ENCODE measurements at regions of chr5 and their contacts with region 1.

Region 1: DNA sequence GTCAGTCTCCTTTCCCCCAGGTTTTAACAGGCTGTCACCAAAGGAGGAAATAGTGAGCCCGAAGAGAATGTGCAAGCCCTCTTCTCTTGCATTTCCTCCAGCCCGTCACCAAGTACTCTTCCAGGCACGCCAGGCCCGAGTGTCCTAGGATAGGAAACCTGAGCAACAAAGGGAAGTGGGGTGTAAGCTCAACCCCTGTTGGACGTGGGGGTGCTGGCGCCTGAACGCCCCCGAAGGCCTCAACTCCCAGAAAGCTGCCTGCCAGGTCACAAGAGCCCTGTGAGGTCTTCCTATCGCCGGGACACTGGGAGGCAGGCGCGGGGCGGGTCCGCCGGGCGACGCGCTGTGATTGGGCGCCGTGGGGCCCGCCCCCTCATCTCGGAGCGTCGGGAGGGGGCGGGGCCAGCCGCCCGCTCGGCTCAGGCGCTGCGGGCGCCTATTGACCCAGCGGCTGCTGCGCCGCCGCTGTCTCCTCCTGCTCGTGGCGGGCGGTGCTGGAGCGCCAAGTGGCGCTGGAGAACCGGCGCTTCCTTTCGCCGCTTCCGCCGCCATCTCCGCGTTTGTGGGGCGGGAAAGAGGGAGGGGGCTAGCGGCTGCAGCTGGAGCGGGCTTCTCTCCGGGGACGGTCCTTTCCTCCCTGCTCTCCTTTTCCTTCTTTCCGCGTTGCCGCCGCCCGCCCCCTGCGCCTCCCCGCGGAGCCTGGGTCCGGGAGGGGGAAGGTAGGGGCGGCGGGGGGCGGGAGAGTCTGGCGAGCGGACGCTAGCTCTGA is 572 bp upstream of the MAN2A1 start:
- H3K4me3 Mint-ChIP-seq: peak overlapping the region; percentile 94
- H3K27ac Mint-ChIP-seq: peak overlapping the region; percentile 93
- H3K4me1 Mint-ChIP-seq: peaks cover 31% of the 10 kb centered on the region
- H3K27me3 Mint-ChIP-seq: no peaks in the 10 kb centered on the region

Region 2: DNA sequence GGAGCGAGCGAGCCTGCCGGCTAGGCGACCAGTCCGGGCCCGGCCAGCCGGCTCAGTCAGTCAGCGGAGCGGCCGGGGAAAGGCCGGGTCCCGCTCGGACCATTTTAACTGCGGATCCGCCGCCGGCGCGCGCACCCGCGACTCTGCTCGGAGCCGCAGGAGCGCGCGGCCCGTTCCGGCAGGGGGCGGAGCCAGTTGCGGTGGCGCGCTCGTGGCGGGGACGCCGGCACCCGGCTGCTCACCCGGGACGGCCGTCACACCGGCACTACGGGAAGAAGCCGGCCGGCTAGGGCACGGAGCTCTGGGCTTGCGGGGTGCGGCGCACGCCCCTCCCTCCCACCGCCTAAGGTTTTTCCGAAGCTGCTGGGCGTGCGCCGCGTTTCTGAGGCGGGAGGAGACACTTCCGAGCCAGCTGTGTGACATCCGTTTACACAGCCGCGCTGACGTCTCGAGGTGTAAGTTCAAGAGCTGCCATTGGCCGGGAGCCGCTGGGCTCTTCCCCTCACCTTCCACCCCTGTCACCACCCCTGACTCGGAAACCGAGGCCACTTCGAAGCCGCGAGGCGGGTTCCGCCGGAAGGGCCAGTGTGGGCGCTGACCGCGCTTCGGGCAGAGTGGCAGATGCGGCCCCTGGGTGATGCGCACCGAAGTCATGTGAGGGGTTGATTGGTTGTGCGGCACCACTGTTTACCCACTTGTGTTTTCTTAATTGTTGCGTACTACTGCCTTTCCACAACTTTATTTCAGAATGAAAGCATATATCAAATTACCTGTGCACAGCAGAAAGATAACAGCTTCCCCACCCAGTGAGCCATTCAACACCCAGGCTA is 1307.0 kb before region 1 on chr5 and contains the start of gene FBXL17:
- intact Hi-C with region 1: loop called (anchors 10 kb)
- H3K4me3 Mint-ChIP-seq: peak within 1 kb of the TSS; percentile 80
- H3K27ac Mint-ChIP-seq: peak within 1 kb of the TSS; percentile 93
- H3K4me1 Mint-ChIP-seq: peaks cover 25% of the 10 kb centered on the region
- H3K27me3 Mint-ChIP-seq: peaks cover 7% of the 10 kb centered on the region

Region 3: DNA sequence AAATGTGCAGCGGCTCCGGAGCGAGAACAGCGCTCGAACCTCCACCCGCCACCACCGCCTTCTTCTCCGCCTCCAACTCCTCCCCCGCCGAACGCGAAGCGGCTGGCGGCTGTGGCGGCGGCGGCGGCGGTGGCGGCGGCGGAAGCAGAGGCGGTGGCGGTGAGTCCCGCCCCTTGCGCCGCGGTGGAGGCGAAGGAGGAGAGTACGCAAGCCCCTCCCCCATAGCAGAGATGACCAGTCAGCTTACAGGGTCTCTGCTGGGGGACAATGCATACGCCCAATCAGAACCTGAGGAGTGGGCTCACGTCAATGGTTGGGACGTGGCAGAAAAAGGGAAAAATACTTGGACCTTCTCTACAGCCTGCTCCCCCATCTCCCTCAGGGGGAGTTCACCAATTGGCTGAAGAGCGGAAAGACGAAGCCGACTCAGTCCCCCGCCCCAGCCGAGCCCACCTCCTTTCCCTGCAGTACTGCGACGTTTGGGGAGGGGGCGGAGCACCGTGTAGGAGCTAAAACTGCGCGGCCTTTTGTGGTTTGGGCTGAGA is 279.2 kb before region 1 on chr5 and contains the start of gene PJA2:
- intact Hi-C with region 1: loop called (anchors 1 kb)
- H3K4me3 Mint-ChIP-seq: peak within 1 kb of the TSS; percentile 97
- H3K27ac Mint-ChIP-seq: peak within 1 kb of the TSS; percentile 98
- H3K4me1 Mint-ChIP-seq: peaks cover 22% of the 10 kb centered on the region
- H3K27me3 Mint-ChIP-seq: no peaks in the 10 kb centered on the region

Region 4: DNA sequence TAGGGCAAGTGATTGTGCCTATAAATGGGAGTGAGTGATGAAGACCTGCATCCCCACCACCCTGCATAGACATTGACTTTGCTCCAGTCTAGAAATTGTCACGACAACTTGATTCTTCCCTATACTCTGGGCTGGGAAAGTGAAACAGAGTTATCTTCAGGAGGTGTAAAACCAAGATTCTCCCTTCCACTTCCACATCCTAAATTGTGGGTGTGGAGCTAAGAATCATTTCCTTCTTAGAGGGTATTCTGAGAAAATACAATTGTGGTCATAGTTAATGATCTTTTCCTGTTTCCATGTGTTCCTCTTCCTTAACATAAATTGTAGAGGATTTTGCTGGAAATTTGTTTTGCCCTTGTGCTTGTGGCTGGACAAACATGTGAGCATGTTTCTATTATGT is 182.6 kb before region 1 on chr5:
- intact Hi-C with region 1: loop called (anchors 10 kb)
- H3K4me3 Mint-ChIP-seq: no peak overlapping the region
- H3K27ac Mint-ChIP-seq: no peak overlapping the region
- H3K4me1 Mint-ChIP-seq: peaks cover 13% of the 10 kb centered on the region
- H3K27me3 Mint-ChIP-seq: peaks cover 37% of the 10 kb centered on the region

Region 5: GRCh38 chr5:109630093-109630492 is 59.1 kb before region 1 on chr5:
- intact Hi-C with region 1: no loop called
- H3K4me3 Mint-ChIP-seq: no peak overlapping the region
- H3K27ac Mint-ChIP-seq: no peak overlapping the region
- H3K4me1 Mint-ChIP-seq: peaks cover 27% of the 10 kb centered on the region
- H3K27me3 Mint-ChIP-seq: peaks cover 5% of the 10 kb centered on the region

Region 6: DNA sequence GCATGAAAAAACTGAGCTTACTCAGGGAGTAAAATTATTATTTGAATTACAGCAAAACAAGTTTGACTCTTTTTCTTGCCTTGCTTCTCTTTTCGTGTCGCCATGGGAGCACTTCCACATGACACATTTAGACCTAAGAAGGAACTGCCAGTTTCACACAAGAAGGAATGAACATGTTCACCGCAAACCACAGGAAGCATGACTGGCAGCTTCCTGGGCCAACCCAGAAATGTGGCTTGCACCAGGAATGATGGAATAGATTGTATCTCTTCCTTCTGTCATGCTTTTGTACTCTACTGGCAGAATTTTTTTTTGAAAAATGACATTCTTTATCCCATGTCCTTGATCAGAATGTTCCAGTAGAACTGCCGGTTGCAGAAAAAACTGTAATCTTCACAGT is 32.3 kb before region 1 on chr5:
- intact Hi-C with region 1: loop called (anchors 2 kb)
- H3K4me3 Mint-ChIP-seq: no peak overlapping the region
- H3K27ac Mint-ChIP-seq: peak overlapping the region; percentile 70
- H3K4me1 Mint-ChIP-seq: peaks cover 35% of the 10 kb centered on the region
- H3K27me3 Mint-ChIP-seq: peaks cover 6% of the 10 kb centered on the region

Region 7: DNA sequence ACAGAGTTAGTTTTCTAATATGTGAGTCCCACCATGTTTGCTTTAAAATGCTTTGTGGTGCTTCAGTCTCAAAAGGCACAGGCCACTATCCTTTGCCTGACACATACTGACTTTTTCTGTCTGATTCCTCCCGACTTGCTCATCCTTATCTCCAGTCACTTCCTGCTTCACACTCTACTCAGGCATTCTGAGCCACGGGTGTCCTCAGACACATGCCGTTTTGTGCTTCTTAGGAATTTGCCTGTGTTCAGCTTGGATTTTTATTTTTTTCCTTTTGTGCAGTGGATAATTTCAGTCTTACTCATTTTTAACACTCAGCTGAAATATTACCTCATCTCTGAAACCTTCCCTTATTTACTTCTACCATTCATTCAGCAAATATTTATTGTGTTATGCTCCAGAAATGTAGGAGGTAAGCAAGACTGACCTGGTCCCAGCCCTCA is 54.6 kb after region 1 on chr5:
- intact Hi-C with region 1: loop called (anchors 2 kb)
- H3K4me3 Mint-ChIP-seq: peak overlapping the region; percentile 28
- H3K27ac Mint-ChIP-seq: peak overlapping the region; percentile 93
- H3K4me1 Mint-ChIP-seq: peaks cover 45% of the 10 kb centered on the region
- H3K27me3 Mint-ChIP-seq: no peaks in the 10 kb centered on the region